Colonic mucosa (tissue), 4 donors: ENCODE measurements at regions of chr7 and their contacts with region 1.

Region 1: DNA sequence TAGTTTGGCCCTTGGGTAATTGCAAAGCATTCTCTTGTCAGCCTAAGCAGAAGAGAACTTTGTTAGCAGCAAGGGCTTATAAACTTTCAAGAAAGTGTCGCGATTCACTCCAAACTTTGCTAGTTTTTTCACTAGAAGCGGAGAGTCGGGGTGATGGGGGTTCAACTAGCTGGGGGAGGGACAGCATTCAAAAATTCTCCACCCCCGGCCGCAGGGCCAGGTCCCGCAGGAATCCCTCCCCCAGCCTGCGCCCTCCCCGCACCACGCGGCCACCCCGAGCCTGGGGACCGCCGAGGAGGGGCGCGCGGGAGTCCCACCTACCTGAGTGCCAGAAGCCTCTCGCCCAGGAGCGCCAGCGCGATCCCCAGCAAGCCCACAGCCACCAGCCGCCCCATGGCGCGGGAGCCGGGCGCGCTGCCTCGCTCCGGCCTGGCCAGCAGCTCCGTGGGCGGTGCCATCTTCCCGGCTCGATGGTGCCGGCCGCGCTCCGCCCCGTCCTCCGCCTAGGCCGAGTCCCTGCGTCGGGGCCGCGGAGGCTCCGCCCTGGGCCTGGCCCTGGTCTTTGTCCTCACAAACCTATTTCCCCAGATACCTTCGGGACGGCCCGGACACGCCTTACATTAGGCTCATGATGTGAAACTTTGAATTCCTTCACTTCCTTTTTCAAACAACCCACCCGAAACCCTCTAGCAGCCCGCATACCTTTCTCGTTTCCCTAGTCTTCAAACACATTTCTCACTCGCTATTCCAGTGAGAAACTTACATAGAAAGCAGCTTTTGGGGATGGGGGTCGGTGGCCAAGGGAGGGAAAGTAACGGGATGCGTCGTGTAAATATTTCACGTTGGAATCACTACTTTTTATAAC is at the start of gene PON2:
- DNase-seq: peak; percentile 88
- H3K4me3 ChIP-seq: peak within 1 kb of the TSS; percentile 70
- H3K27ac ChIP-seq: peak within 1 kb of the TSS; percentile 77
- H3K4me1 ChIP-seq: no peaks in the 10 kb centered on the region
- H3K27me3 ChIP-seq: no peaks in the 10 kb centered on the region
- CTCF ChIP-seq: no peak
- total RNA-seq, gene PON2: 89.8 to 99.4 TPM

Region 2: DNA sequence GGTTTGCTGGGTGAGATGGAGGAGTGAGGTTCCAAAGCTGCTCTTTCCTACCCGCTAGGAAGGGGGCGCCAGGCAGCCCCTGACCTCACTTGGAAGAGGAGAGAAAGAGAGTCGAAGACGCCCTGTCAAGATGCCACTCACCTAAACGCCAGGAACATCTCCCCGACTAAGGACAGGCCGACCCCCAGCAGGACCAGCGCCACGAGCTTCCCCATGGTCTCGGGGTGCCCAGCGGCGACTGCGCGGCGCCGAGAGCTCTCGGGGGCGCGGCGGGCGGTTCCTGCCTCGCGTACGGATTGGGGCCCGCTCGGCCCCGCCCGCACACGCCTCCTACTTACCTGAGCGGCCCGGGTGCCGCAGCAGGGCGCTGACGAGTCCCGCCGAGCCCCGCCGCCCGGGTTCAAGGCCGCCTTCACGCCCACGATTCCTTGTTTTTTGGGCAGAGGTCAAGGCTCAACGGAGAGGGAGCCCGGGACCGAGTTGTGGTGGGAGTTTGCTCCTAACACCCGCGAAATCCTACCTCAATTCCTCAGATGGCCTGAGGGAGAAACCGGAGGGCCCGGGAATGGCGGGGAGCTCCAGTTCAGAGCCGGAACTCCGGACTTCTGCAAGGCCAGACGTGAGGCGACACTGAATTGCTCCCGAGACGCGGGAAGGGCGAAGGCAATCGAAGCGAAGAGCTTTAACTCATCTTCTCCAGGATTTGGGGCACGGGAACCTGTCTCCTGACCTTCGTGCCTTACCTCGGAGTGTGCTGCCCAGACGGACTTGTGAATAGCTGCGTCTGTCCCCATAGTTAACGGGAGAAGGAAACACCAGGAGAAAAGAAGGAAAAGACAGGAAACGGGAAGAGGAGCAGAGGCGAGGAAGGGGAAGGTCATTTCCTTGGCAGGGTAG is 38.4 kb before region 1 on chr7 and contains the start of gene PON3:
- intact Hi-C with region 1: loop called (anchors 5 kb)
- DNase-seq: peak; percentile 65
- H3K4me3 ChIP-seq: peak within 1 kb of the TSS; percentile 52
- H3K27ac ChIP-seq: no peak within 1 kb of the TSS
- H3K4me1 ChIP-seq: no peaks in the 10 kb centered on the region
- H3K27me3 ChIP-seq: no peaks in the 10 kb centered on the region
- CTCF ChIP-seq: no peak
- total RNA-seq, gene PON3: 3.0 to 3.5 TPM